SK-N-SH (cell line): ENCODE measurements at regions of chr14 and their contacts with region 1.

Region 1: DNA sequence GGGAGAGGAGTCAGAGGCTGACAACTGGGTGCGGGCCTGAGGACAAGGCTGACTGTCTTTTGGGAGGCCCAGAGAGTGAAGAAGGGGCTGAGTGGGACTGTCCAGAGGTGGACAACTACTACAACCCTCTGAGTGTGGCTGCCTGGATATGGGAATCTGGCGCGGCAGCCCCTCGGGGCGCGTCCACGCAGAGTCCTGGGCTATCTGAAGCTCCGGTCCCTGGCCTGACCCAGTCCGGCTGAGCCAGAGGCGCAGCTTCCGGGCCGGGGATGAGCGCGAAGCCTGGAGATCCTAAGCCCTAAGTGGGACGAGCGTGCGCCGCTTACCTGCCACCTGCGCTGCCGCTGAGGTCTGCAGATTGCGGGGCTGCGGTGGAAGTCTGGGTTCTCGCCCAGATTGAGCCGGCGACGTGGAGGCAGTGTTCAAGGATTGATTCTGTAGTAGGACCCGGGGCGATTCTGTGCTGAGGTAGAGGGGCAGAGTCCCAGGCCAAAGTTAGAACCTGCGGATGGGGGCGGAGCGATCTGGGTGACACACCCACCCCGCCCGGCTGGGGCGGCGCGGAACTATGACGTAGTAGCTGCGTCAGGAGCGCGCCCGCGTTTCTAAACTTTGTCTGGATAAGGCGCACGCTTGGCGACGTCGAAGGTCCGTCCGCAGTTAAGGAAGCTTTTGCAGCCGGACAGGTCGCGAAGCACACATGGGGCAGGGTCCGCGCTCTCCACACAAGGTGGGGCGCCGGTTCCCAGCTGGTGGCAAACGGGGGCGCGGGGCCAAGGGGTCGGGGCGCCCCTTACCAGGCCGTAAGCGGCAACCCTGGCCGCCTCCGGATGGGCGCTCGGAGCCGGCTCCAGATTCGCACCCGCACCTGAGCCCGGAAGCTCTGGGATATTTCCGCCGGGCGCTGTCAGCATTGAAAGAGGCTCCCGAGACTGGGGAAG is at the starts of genes DHRS1 and NOP9:
- DNase-seq: peak; percentile 97
- H3K4me3 ChIP-seq: peak within 1 kb of the TSS; percentile 92 to 93
- H3K27ac ChIP-seq: peak within 1 kb of the TSS; percentile 63 to 69; a peak in 3 of 4 replicates
- H3K4me1 ChIP-seq: peaks cover 13 to 14% of the 10 kb centered on the region in 2 experiments
- H3K27me3 ChIP-seq: no peaks in the 10 kb centered on the region
- CTCF ChIP-seq: no peak
- EP300 ChIP-seq: no peak
- RAD21 ChIP-seq: no peak
- polyA plus RNA-seq, gene DHRS1: 65.4 and 71.7 TPM in 2 replicates
- polyA plus RNA-seq, gene NOP9: 11.9 and 17.2 TPM in 2 replicates

Region 2: GRCh38 chr14:24215495-24216344 is 83.8 kb before region 1 on chr14 and contains the start of gene MDP1:
- CTCF ChIA-PET with region 1: interaction called, 20 read pairs
- POLR2A ChIA-PET with region 1: no interaction called
- DNase-seq: peak; percentile 86
- H3K4me3 ChIP-seq: peak within 1 kb of the TSS; percentile 73 to 82
- H3K27ac ChIP-seq: peak within 1 kb of the TSS; percentile 71 to 88
- H3K4me1 ChIP-seq: peaks cover 9 to 17% of the 10 kb centered on the region in 2 experiments; a peak in 3 of 4 replicates
- H3K27me3 ChIP-seq: no peaks in the 10 kb centered on the region
- CTCF ChIP-seq: peak; percentile 70
- EP300 ChIP-seq: no peak
- RAD21 ChIP-seq: peak; percentile 69
- polyA plus RNA-seq, gene MDP1: 36.4 and 36.7 TPM in 2 replicates

Region 3: DNA sequence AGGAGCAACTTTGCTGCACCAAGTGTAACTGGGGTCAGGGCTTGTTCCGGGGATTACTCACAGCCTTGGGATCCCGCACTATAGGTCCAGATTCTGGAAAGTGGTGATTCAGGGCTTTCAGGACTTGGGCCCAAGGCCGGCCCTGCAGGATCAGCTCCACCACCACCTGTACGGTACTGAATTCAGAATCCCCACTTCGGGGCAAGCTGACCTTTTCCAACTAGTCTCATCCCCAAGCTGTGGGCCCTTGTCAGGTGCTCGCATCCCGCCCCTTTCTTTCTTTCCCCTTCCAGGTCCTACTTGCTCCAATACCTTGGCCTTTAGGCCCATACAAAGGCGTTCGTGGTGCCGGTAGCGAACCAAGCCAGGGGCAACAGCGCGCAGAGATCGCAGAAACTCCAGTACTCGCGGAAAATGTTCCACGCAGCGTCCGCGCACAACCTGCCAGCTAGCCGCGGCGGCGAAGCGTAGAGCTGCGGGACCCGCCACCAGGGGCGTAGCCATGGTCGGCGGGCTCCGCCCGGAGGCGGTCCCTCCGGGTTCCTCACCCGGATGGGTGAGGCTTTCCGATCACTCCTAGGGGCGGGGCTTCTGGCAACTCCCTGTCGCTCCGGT is 57.6 kb before region 1 on chr14:
- CTCF ChIA-PET with region 1: interaction called, 191 read pairs
- POLR2A ChIA-PET with region 1: interaction called, 27 read pairs
- DNase-seq: peak; percentile 96
- H3K4me3 ChIP-seq: peak overlapping the region; percentile 68 to 94
- H3K27ac ChIP-seq: peak overlapping the region; percentile 96
- H3K4me1 ChIP-seq: peaks cover 26% of the 10 kb centered on the region in 2 experiments; a peak in 2 of 4 replicates
- H3K27me3 ChIP-seq: no peaks in the 10 kb centered on the region
- CTCF ChIP-seq: peak; percentile 40
- EP300 ChIP-seq: no peak
- RAD21 ChIP-seq: no peak

Region 4: GRCh38 chr14:24271134-24271833 is 28.2 kb before region 1 on chr14 and contains the start of gene RABGGTA:
- CTCF ChIA-PET with region 1: interaction called, 22 read pairs
- POLR2A ChIA-PET with region 1: interaction called, 6 read pairs
- DNase-seq: peak; percentile 97
- H3K4me3 ChIP-seq: peak within 1 kb of the TSS; percentile 82 to 83
- H3K27ac ChIP-seq: peak within 1 kb of the TSS; percentile 87 to 95
- H3K4me1 ChIP-seq: peaks cover 6 to 10% of the 10 kb centered on the region in 2 experiments; a peak in 2 of 4 replicates
- H3K27me3 ChIP-seq: no peaks in the 10 kb centered on the region
- CTCF ChIP-seq: peak; percentile 68
- EP300 ChIP-seq: peak in 1 of 2 experiments; percentile 62; a peak in 2 of 4 replicates
- RAD21 ChIP-seq: no peak
- polyA plus RNA-seq, gene RABGGTA: 54.9 and 59.4 TPM in 2 replicates

Region 5: GRCh38 chr14:24310646-24311604 is 11.4 kb after region 1 on chr14 and contains the start of gene LTB4R:
- CTCF ChIA-PET with region 1: interaction called, 77 read pairs
- POLR2A ChIA-PET with region 1: interaction called, 4 read pairs
- DNase-seq: no peak
- H3K4me3 ChIP-seq: no peak within 1 kb of the TSS
- H3K27ac ChIP-seq: no peak within 1 kb of the TSS
- H3K4me1 ChIP-seq: peaks cover 0 to 2% of the 10 kb centered on the region in 2 experiments; a peak in 1 of 4 replicates
- H3K27me3 ChIP-seq: no peaks in the 10 kb centered on the region
- CTCF ChIP-seq: no peak
- EP300 ChIP-seq: no peak
- RAD21 ChIP-seq: no peak
- polyA plus RNA-seq, gene LTB4R: 11.9 and 14.0 TPM in 2 replicates

Region 6: GRCh38 chr14:24321212-24321975 is 21.9 kb after region 1 on chr14:
- CTCF ChIA-PET with region 1: no interaction called
- POLR2A ChIA-PET with region 1: no interaction called
- DNase-seq: no peak
- H3K4me3 ChIP-seq: no peak overlapping the region
- H3K27ac ChIP-seq: no peak overlapping the region
- H3K4me1 ChIP-seq: peaks cover 0 to 8% of the 10 kb centered on the region in 2 experiments; a peak in 1 of 4 replicates
- H3K27me3 ChIP-seq: peaks cover 12% of the 10 kb centered on the region; the same call in 1 of the 2 replicates
- CTCF ChIP-seq: no peak
- EP300 ChIP-seq: no peak
- RAD21 ChIP-seq: no peak

Region 7: DNA sequence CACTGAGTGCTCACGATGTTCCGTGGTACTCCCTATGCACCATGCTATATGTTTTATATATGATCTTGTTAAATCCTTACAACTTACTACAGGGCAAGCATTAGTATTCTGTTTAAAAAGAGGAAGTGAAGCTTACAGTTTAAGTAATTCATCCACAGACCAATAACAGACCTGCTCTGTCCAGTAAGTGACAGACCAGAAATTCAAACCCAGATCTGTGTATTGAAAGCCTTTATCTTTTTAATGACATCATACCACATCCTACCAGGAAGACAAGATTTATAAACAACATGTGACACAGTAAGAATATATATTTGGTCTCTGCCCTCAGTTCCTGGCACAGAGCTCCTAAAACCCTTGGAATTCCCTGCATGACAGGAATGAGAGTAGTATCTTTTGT is 544.0 kb after region 1 on chr14:
- CTCF ChIA-PET with region 1: no interaction called
- POLR2A ChIA-PET with region 1: no interaction called
- DNase-seq: no peak
- H3K4me3 ChIP-seq: no peak overlapping the region
- H3K27ac ChIP-seq: no peak overlapping the region
- H3K4me1 ChIP-seq: no peaks in the 10 kb centered on the region
- H3K27me3 ChIP-seq: no peaks in the 10 kb centered on the region
- CTCF ChIP-seq: no peak
- EP300 ChIP-seq: no peak
- RAD21 ChIP-seq: no peak